ENCODE measurements at regions of chr4 and their contacts with region 1.

Region 1: GRCh38 chr4:40254608-40255392 is 58.0 kb downstream of the RHOH start:
- DNase-seq: peak in 1 of 35 experiments; percentile 39
- ATAC-seq: peak; percentile 31 to 63 (median 57)
- H3K4me3 ChIP-seq: no peak overlapping the region
- H3K4me3 Mint-ChIP-seq: peak overlapping the region; percentile 1 to 57 (median 55)
- H3K27ac ChIP-seq: peak overlapping the region; percentile 52
- H3K27ac Mint-ChIP-seq: peak overlapping the region; percentile 82 to 97
- H3K4me1 ChIP-seq: peaks cover 43 to 70% of the 10 kb centered on the region in 2 experiments
- H3K4me1 Mint-ChIP-seq: peaks cover 76 to 87% (median 77%) of the 10 kb centered on the region in 3 donors
- H3K27me3 ChIP-seq: no peaks in the 10 kb centered on the region
- H3K27me3 Mint-ChIP-seq: no peaks in the 10 kb centered on the region

Region 2: DNA sequence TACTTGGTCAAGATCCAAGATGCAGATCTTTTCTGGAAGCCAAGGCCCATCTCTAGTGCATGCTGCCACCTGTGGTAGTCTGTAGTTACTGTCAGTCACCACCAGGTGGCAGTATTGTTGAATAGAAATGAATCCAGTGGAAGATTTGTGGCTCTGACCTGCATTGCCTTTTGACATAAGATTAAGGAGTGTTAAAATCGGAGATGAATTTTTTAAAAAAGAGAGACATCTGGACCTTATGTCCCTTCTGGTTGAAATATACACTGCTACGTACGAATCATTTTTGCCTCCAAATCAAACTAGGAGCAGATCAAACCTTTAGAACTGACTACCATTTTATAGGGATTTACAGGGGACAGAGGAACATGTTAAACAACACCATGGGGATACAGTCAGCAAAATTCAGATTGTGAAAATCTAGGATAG is 104.8 kb before region 1 on chr4:
- CTCF ChIA-PET with region 1: no interaction called
- POLR2A ChIA-PET with region 1: interaction called in 1 of 2 experiments, 14 read pairs
- DNase-seq: peak; percentile 29 to 89 (median 68)
- ATAC-seq: peak; percentile 80 to 91 (median 85)
- H3K4me3 ChIP-seq: no peak overlapping the region
- H3K4me3 Mint-ChIP-seq: no peak overlapping the region
- H3K27ac ChIP-seq: peak overlapping the region; percentile 4
- H3K27ac Mint-ChIP-seq: peak overlapping the region; percentile 87 to 89
- H3K4me1 ChIP-seq: peaks cover 11 to 34% of the 10 kb centered on the region in 2 experiments
- H3K4me1 Mint-ChIP-seq: peaks cover 36 to 41% (median 39%) of the 10 kb centered on the region in 3 donors
- H3K27me3 ChIP-seq: no peaks in the 10 kb centered on the region
- H3K27me3 Mint-ChIP-seq: no peaks in the 10 kb centered on the region